AG04449 (cell line): ENCODE measurements at regions of chr16 and their contacts with region 1.

Region 1: DNA sequence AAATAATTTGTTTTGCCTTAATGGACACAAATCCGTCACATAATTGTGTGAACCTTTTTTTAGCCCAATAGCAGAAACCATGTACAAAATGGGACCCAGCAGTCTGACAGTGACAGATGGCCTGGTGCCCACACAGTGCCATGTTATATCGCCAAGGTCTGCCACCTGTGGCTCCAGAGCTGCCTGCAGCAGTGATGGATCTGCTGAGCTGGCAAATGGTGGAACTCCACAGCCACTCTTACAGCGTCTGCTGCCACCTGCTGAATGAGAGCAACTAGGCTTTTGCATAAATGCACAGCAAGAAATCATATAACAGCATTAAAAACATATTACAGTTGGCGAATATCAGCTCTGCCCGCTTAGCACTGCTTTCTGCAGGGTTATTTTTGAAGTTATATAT is 59.4 kb downstream of the NUP93 start:
- DNase-seq: no peak
- H3K4me3 ChIP-seq: no peak overlapping the region
- CTCF ChIP-seq: peak; percentile 50

Region 2: GRCh38 chr16:56776562-56776961 is 12.8 kb before region 1 on chr16:
- CTCF ChIA-PET with region 1: interaction called, 108 read pairs
- POLR2A ChIA-PET with region 1: no interaction called
- DNase-seq: no peak
- H3K4me3 ChIP-seq: no peak overlapping the region
- CTCF ChIP-seq: no peak

Region 3: DNA sequence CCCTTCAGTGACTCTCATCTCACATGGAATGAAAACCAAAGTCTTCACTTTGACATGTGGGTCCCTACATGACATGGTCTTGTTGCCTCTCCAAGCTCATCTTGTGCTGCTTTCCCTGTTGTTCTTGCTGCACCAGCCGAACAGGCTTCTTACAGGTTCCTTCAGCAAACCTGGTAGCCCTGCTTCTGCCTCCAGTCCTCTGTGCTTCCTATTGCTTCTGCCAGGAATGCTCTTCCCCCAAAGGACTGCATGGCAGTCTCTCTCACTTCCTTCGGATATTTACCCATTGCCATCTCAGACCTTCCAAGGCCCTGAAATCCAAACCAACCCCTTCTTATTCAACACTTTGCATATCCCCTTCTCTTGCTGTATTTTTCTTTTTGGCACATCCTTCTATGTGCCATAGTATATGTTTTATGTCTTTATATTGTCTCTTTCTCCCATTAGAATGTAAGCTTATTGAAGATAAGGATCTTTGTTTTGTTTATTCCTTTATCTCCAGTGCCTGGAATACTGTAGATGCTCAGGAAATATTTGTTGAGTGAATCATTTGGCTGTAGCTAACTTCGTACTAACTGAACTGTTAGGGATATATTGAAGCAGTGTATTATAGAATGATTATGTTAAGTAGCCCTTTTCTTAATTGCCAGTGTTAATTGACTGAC is 17.8 kb after region 1 on chr16:
- CTCF ChIA-PET with region 1: interaction called, 43 read pairs
- POLR2A ChIA-PET with region 1: no interaction called
- DNase-seq: peak; percentile 28
- H3K4me3 ChIP-seq: no peak overlapping the region
- CTCF ChIP-seq: no peak

Region 4: DNA sequence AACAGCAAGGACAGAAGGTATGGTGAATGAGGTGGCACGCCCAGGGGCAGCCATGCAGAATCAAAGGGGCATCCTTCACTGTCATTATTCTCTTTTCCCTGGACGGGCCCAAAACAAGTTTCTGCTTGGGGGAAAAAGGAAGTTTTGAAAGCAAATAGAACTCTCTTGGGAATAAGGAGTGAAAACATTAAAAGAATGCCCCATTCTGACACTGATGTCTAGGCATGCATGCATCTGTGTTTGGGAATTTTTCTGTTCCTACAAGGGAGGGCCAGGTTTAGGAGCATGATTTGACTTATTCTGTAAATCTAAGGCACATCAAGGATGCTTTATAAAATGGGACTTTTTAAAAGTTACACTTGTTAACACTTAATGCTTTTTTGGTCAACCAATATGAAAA is 41.3 kb after region 1 on chr16:
- CTCF ChIA-PET with region 1: interaction called, 11 read pairs
- POLR2A ChIA-PET with region 1: no interaction called
- DNase-seq: no peak
- H3K4me3 ChIP-seq: no peak overlapping the region
- CTCF ChIP-seq: no peak

Region 5: DNA sequence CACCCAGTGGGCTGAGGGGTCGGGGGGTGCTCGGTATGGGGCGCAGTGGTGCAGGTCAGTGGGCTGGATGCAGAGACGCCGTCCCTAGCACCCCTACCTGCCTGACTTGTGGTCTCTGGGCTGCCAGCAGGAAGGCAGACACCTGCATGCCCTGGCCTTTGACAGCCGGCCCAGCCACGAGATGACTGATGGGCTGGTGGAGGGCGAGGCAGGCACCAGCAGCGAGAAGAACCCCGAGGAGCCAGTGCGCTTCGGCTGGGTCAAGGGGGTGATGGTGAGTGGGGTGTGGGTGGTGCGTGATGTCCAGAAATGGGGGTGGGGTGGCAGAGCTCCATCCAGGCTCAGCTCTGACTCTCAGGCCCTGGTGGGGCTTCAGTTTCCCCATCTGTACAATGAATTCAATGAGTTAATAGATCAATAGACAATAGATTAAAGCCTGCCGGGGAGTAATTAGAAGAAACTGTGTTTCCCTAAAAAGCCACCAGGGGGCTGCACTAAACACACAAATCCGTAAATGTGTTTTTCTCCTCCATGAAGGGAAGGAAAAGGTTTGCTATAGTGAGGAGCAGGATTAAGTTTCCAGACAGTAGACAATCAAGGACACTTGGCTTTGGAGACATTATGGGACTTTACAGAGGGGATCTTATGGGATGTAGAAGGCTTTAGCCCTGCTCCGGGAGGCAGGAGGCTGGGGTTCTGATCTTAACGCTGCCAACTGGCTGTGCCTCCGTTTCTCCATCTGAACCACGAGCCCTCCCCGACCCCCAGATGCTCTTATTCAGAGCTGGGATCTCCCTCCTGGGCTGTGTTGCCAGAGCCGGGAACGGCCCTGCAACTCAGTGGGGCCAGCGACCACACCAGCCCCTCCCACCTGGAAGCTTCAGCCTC is 77.8 kb after region 1 on chr16:
- CTCF ChIA-PET with region 1: interaction called, 570 read pairs
- POLR2A ChIA-PET with region 1: no interaction called
- DNase-seq: no peak
- H3K4me3 ChIP-seq: no peak overlapping the region
- CTCF ChIP-seq: peak; percentile 49

Region 6: DNA sequence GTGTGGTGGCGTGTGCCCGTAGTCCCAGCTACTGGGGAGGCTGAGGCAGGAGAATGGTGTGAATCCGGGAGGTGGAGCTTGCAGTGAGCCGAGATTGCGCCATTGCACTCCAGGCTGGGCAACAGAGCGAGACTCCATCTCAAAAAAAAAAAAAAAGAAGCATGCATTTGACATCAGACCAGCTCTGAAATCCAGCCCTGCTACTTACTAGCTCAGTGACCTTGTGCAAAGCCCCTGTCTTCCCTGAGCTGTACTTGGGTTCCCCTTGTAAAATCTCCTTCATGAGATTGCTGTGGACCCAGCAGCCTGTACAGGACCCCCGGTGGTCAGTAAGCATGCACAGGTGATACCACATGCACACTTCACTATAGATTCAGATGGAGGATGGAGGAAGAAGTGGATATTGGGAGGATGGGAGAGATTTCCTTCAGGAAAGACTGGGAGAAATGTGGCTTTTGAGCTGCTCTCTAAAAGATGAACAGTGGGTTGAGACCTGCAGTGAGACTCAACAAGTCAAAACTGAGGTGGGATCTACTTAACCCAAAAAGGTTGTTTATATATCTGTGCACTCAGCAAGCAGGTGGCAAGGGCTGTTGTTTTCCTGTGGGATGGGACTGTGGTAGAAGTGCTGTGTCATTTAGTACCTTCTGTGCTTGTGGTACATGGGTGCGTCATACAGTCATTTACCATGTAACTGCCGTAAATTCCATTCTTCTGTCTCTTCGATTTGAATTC is 149.2 kb after region 1 on chr16:
- CTCF ChIA-PET with region 1: interaction called, 14 read pairs
- POLR2A ChIA-PET with region 1: interaction called, 4 read pairs
- DNase-seq: no peak
- H3K4me3 ChIP-seq: no peak overlapping the region
- CTCF ChIP-seq: no peak

Region 7: DNA sequence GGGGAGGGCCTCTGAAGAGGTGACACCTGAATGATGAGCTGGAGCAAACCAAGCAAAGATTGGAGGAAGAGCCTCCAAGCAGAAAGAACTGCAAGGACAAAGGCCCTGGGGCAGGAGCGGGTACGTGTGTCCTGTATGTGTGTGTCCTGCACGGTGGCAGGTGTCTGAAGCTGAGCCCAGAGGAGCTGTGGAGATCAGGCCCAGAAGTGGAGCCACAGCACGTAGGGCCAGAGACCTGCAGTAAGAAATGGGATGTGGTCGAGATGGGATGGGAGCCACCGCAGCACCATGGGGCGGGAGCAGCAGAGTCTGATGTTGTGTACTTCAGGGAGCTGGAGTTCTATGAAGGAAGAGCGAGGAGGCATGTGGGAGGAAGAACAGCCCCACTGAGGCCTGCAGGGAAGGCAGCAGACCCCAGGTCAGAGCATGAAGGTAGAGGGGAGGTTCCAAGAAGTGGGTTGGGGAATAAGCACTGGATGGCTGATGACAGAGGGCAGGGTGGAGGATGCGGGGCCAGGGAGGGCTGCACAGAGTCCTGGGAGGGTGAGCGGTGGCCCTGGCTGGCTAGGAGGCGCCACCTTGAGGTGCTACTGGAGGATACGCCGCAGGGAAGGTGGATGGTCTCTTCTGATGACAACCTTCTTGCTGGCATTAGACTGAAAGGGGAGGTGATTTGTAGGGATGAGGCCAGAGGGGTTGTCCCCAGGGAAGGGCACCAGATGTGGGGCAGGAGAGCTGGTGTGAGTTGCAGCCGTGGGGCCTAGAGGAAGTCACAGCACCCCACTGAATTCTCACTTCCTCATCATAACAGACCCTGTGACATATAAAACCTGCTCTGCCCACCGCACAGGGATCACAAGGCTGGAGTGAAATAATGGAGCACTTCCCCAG is 161.8 kb after region 1 on chr16:
- CTCF ChIA-PET with region 1: interaction called, 40 read pairs
- POLR2A ChIA-PET with region 1: no interaction called
- DNase-seq: no peak
- H3K4me3 ChIP-seq: no peak overlapping the region
- CTCF ChIP-seq: peak; percentile 87